ENCODE measurements at regions of chr13 and their contacts with region 1.

Region 1: DNA sequence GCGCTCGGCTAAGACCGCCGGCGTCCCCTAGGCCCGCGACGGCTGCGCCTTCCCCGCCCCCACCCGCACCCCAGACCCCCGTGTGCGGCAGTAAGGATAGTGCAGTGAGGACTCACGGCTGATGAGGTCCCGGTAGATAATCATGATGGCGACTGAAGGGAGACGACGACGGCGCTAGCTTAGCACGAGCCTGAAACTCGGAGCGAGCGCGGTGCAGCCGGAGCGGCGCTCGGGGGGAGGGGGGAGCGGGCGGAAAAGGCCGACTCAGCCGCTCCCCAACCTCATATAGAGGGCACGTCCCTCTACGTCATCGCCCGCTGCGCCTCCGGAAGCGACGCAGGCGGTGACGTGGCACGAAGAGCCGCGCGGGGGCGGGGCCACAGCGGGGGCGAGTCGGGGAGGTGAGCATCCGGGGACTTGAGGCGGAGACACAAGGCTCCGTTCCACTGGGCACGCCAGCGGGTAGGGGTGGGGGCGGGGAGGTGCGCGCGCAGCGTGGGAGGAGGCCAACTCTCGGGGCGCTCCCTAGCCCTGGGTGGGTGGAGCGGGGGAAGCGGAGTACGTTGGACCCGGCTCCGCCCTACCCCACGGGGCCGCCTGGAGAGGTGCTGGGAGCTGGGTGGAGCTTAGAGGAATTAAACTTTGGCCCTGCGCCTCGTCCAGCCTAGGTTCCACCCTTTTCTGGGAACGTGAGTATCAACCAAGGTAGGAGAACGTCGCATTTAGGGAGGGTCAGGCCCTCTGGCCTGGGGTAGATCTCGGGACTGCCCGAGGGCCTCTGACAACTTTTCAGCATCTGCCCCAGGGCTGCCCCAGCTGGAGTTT is at the start of gene TPT1:
- DNase-seq: peak; percentile 99
- H3K4me3 Mint-ChIP-seq: peak within 1 kb of the TSS; percentile 99
- H3K27ac Mint-ChIP-seq: peak within 1 kb of the TSS; percentile 100
- H3K4me1 Mint-ChIP-seq: peaks cover 56% of the 10 kb centered on the region
- H3K27me3 Mint-ChIP-seq: no peaks in the 10 kb centered on the region
- total RNA-seq, gene TPT1: 2,353 and 2,360 TPM in 2 replicates

Region 2: GRCh38 chr13:43878892-43879754 is 1462.0 kb before region 1 on chr13 and contains the start of gene CCDC122:
- intact Hi-C with region 1: no loop called
- DNase-seq: peak; percentile 75
- H3K4me3 Mint-ChIP-seq: peak within 1 kb of the TSS; percentile 84
- H3K27ac Mint-ChIP-seq: peak within 1 kb of the TSS; percentile 81
- H3K4me1 Mint-ChIP-seq: peaks cover 28% of the 10 kb centered on the region
- H3K27me3 Mint-ChIP-seq: peaks cover 15% of the 10 kb centered on the region
- total RNA-seq, gene CCDC122: 0.86 and 1.5 TPM in 2 replicates

Region 3: DNA sequence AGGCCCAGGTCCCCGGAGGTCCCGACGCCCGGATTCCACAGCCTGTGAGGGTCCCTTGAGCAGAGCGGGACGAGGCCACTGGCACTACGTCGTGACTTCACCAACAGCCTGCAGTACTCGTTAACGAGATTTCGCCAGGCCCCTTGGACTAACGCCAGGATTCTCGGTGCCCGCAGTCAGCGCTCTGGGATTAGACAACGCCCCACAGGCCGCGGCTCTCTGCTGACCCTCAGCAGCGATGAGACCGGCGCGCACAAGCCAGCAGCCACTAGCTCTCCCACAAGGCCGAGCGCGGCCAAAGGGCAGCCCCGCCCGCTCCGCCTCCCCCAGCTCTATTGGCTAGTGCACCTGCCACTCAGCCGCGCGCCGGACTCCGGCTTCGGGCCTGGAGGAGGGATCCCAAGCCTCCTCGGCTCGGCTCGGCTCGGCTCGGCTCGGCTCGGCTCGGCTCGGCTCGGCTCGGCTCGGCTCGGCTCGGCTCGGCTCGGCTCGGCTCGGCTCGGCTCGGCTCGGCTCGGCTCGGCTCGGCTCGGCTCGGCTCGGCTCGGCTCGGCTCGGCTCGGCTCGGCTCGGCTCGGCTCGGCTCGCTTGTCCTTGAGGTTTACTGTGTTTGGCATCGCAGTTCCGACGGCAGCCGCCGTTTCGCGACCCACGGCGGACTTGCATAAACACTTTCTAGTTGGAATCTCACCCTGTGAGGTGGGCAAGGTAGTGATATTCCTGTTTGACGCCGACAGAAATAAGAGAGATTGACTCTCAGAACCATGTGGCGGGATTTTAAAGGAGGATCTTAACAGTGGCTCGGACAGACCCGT is 1199.2 kb before region 1 on chr13:
- intact Hi-C with region 1: loop called (anchors 5 kb)
- DNase-seq: peak; percentile 94
- H3K4me3 Mint-ChIP-seq: peak overlapping the region; percentile 85
- H3K27ac Mint-ChIP-seq: peak overlapping the region; percentile 82
- H3K4me1 Mint-ChIP-seq: peaks cover 26% of the 10 kb centered on the region
- H3K27me3 Mint-ChIP-seq: peaks cover 41% of the 10 kb centered on the region

Region 4: DNA sequence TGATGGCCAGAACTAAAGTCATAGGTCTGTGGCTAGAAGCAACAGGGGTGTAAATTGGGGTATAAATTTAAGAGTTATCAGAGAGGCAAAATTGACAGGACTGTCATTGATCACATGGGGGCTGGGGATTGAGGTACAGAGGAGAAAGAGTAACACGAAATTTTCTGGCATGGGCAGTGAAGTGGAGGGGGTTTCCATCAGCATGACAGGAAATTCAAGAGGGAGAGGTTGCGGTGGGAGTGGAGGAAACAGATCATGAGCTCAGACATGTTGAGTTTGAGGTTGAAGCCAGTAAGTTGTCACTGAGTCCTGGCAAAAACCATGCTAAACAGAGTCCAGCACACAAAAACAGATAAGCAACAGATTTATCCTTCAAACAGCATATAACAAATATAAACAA is 572.9 kb before region 1 on chr13:
- intact Hi-C with region 1: loop called (anchors 2 kb)
- DNase-seq: peak; percentile 63
- H3K4me3 Mint-ChIP-seq: peak overlapping the region; percentile 41
- H3K27ac Mint-ChIP-seq: peak overlapping the region; percentile 82
- H3K4me1 Mint-ChIP-seq: peaks cover 56% of the 10 kb centered on the region
- H3K27me3 Mint-ChIP-seq: no peaks in the 10 kb centered on the region

Region 5: GRCh38 chr13:45119991-45120864 is 220.9 kb before region 1 on chr13 and contains the start of gene GTF2F2:
- intact Hi-C with region 1: loop called (anchors 1 kb)
- DNase-seq: peak; percentile 85
- H3K4me3 Mint-ChIP-seq: no peak within 1 kb of the TSS
- H3K27ac Mint-ChIP-seq: no peak within 1 kb of the TSS
- H3K4me1 Mint-ChIP-seq: peaks cover 13% of the 10 kb centered on the region
- H3K27me3 Mint-ChIP-seq: no peaks in the 10 kb centered on the region
- total RNA-seq, gene GTF2F2: 30.1 and 30.8 TPM in 2 replicates

Region 6: DNA sequence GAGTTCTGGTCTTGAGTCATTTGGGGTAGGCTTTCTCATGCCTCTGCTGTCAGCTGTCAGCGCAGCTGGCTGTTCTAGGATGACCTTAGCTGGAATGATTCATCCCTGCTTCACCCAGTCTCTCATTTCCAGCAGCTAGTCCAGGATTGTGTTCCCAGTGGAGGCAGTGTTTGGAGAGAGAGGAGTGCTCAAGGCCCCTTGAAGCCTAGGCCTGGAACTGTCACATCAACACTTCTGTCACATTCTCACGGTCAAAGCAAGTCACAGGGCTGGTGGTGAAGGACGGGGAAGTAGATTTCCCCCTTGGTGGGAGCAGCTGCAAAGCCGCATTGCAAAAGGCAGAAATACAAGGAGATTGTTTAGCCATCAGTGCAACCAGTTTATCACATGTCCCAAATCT is 15.3 kb before region 1 on chr13:
- intact Hi-C with region 1: no loop called
- DNase-seq: no peak
- H3K4me3 Mint-ChIP-seq: no peak overlapping the region
- H3K27ac Mint-ChIP-seq: no peak overlapping the region
- H3K4me1 Mint-ChIP-seq: peaks cover 33% of the 10 kb centered on the region
- H3K27me3 Mint-ChIP-seq: no peaks in the 10 kb centered on the region

Region 7: DNA sequence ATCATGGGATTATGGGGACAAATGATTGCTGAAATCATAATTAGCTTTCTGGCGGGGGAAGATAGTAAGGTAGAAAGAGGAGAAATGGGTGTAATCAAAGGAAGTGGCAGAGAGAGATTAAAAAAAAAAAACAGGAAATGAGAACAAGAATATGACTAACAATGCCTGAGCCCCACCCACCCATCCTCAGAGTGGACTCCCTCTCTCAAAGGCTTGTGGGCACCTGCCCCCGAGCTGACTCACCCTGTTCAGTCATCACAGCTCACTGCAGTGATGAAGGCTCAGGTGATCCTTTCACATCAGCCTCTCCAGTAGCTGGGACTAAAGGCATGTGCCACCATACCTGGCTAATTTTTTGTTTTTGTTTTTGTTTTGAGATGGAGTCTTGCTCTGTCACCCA is 26.2 kb after region 1 on chr13:
- intact Hi-C with region 1: loop called (anchors 1 kb)
- DNase-seq: peak; percentile 86
- H3K4me3 Mint-ChIP-seq: peak overlapping the region; percentile 64
- H3K27ac Mint-ChIP-seq: peak overlapping the region; percentile 91
- H3K4me1 Mint-ChIP-seq: peaks cover 55% of the 10 kb centered on the region
- H3K27me3 Mint-ChIP-seq: no peaks in the 10 kb centered on the region

Region 8: DNA sequence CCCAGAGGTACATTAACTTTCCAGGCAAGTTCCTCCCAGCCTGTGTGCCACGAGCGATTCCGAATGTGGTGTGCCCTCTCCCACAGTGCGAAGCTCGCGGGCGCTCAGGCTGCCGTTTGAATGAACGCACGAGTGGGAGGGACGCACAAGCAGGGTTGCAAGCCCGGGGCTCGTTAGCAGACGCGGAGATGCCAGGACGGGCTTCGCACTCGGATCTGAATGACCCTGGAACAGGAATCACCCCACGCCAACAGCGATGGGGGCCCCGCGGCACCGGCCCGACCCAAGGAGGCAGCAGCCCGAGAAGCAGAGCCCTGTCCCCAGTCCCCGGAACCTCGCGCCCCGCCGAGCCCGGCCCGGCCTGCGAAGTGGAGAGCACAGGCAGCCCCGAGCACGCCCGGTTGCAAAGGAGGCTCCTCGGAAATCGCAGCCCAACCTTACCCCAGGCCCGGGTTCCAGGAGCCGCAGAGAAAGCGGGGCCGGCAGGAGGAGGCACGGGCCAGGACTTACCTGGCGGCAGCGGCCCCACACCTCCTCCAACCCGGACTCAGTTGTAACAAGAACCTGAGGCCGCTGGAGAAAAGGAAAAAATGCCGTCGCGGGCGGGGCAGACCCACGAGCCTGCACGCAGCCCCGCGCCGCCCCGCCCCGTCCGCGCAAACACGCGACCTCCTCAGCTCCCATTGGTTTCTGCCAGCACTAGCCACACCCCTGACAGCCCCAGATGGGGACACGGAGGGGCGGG is 76.8 kb after region 1 on chr13 and contains the start of gene SLC25A30:
- intact Hi-C with region 1: loop called (anchors 1 kb)
- DNase-seq: peak; percentile 85
- H3K4me3 Mint-ChIP-seq: peak within 1 kb of the TSS; percentile 94
- H3K27ac Mint-ChIP-seq: peak within 1 kb of the TSS; percentile 92
- H3K4me1 Mint-ChIP-seq: peaks cover 18% of the 10 kb centered on the region
- H3K27me3 Mint-ChIP-seq: no peaks in the 10 kb centered on the region
- total RNA-seq, gene SLC25A30: 16.0 and 16.3 TPM in 2 replicates

Region 9: DNA sequence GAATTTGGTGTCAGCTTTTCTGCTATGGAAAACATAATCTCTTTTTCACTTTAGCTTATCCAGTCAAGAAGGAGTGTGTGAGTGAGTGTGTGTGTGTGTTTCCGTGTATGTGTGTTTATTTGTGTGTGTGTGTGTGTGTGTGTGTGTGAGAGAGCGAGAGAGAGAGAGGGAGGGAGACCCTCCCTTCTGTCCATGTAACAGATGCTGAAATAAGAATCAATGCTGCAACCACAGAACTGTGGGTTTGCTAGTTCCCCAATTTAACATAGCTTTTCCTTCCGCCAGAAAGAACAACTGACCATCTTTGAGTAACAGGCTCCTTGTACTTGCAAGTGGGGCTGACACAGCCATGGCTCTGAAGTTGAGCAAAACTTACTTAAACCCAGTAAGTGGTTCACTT is 835.6 kb after region 1 on chr13:
- intact Hi-C with region 1: loop called (anchors 2 kb)
- DNase-seq: no peak
- H3K4me3 Mint-ChIP-seq: peak overlapping the region; percentile 97
- H3K27ac Mint-ChIP-seq: peak overlapping the region; percentile 86
- H3K4me1 Mint-ChIP-seq: peaks cover 73% of the 10 kb centered on the region
- H3K27me3 Mint-ChIP-seq: no peaks in the 10 kb centered on the region